G401 (cell line): ENCODE measurements at regions of chr15 and their contacts with region 1.

Region 1: GRCh38 chr15:89293012-89293411 is 41.6 kb downstream of the POLG start:
- DNase-seq: no peak

Region 2: GRCh38 chr15:89197503-89197971 is 95.5 kb before region 1 on chr15:
- in situ Hi-C with region 1: no loop called
- DNase-seq: peak; percentile 37

Region 3: DNA sequence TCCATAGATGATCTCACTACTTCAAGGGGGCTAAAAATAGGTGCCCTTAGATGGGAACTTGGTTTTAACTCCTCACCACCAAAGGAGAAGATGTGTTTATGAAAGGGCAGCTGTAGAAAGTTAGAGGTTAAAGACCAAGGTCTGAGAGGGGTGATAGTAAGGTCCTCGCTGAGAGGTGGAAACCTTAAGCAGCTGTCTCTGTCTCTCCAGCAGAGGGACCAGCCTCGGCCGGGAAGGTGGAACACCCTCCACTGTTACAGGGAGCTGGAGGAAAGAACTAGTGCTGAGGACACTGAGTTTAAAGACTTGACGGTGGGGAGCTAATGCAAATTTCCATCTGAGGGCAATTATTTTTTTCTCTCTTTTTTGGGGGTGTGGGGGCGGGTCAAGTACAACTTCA is 62.7 kb before region 1 on chr15:
- in situ Hi-C with region 1: no loop called
- DNase-seq: no peak

Region 4: DNA sequence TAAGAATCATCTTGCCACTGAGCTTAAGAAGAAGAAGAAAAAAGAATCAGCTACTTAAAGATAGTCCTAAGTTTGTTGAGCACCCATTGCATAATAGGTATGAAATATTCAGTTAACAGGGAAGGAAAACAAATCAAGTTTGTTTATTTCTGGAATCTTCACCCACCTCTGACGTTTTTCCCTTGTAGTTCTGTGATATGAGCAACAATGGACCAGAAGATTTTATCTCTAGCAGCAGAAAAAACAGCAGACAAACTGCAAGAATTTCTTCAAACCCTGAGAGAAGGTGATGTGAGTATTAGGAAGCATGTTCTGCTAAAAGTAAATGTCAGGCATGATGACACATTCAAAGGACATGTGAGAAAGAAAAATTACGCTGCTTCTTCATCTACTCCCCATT is 45.6 kb before region 1 on chr15:
- in situ Hi-C with region 1: loop called (anchors 5 kb)
- DNase-seq: no peak

Region 5: DNA sequence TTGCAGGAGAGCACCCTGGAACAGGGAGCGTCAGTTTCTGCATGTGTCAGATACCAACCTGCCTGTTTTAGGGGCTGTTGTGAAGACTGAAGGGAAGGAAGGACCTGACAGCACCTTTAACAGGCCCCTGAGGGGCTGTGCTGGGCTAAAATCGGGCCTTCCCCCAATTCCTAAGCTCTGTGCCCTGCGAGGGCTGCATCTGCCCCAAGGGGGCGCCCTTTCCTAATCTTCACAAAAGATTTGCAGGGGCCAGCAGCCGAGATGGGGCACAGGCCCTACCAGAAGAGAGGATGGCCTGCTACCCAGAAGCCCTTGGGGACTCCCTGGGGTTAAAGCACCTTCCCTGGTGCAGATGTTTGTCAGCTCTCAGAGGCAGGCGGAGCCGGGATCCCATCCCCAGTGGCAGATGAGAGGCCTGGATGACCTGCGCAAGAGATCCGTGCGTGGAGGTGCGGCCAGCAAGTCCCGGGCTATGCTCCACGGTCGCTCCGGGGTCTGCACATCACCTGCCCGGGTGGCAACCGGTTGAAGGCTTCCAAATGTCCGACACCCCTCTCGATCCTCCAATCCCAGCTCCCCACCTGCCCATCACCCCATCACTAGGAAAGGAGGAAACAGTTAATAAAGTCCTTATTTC is 149.8 kb after region 1 on chr15:
- in situ Hi-C with region 1: no loop called
- DNase-seq: peak; percentile 21